ENCODE measurements at regions of chr14 and their contacts with region 1.

Region 1: GRCh38 chr14:73503648-73504047 is 12.9 kb downstream of the RIOX1 start:
- DNase-seq: no peak
- ATAC-seq: no peak

Region 2: GRCh38 chr14:73627151-73627558 is 123.5 kb after region 1 on chr14:
- intact Hi-C with region 1: loop called (anchors 5 kb)
- DNase-seq: no peak
- ATAC-seq: no peak

Measured in Right ventricle myocardium superior (tissue), 1 donor.